ENCODE measurements at regions of chr3 and their contacts with region 1.

Region 1: GRCh38 chr3:158845765-158846350 is 44.0 kb downstream of the MFSD1 start:
- DNase-seq: no peak

Region 2: DNA sequence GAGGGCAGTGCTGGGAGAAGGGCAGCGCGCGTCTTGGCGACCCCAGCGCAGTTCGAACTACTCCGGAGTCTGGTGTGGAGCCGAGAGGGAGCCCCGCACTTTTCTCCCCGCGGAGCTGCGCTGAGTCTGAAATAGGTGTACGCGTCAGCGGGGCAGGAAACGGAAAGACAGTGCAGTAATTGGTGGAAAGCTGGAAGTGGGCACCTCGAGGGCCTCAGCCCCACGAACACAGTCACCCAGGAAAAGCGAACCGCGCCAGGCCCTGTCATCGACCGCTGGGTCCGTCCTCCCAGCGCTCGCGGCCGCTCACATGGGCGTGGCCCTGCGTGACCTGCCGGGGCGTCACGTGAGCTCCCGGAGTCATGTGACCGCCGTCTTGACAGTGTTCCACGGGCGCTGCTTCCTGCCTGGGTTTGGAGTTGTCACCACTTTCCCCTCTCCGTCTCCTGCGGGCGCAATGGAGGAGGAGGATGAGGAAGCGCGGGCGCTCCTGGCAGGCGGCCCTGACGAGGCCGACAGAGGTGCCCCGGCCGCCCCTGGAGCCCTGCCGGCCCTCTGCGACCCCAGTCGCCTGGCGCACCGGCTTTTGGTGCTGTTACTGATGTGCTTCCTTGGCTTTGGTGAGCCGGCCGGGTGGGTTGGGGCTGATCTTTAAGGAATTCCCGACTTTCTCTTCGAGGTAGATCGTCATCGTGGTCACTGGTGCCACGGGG is 44.0 kb before region 1 on chr3 and contains the start of gene MFSD1:
- intact Hi-C with region 1: no loop called
- DNase-seq: peak; percentile 99
- total RNA-seq, gene MFSD1: 62.0 to 80.3 TPM

Region 3: DNA sequence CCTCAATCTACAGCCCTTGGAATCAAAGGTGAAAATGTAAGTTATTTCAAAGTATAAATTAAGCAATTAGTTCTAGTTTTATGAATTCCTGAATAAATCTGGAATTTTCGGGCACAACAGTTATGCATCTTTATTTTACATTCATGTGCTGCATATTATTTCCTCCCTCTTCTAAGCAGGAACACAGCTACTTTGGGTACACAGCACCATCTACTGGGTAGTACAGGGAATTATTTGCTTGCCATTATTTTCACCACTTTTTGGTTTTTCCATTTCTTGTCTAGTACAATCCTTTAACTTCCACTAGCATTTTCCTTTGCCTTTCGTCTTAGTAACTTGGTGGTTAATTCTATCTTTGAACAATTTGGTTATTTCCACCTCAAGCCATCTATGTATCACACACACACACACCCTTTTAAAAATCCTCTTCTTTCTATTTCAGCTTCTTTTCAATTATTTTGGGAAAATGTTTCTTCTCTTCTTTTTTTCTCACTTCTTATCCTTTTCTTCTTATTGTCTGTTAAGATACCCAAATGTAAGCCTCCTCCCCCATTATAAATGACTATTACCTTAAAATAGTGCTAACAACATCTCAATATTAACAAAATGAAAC is 407.0 kb after region 1 on chr3:
- intact Hi-C with region 1: loop called (anchors 5 to 10 kb)
- DNase-seq: no peak

Region 4: DNA sequence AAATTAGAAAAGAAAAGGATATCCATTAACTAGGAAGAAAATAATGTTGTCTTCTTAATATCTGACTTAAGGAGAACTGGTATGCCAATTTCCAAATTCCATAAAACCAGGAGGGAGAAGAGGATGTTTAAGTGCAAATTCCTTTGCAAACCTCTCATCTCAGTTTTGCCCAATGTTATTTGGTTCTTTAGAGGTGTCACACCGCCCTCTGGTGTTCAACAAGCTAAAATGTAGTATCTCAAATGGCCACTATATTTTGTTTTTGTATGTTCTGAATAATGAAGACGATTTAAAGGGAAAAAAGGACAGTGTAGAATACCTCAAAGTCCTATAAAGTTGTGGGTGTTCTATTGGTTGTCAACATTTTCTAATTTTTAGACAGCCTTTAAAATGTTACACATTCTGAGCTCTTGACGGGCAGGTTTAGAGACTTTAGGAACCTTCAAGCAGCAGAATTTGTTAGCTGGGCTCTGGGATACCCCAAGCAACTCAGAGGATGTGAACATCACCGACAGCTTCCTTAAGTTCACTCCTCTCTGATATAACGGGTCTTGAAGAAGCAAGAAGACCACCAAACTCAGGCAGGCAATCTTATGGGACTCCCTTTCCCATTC is 414.3 kb after region 1 on chr3:
- intact Hi-C with region 1: loop called (anchors 5 to 10 kb)
- DNase-seq: no peak